Left ventricle myocardium superior (tissue), 1 donor: ENCODE measurements at regions of chr5 and their contacts with region 1.

Region 1: GRCh38 chr5:23289162-23289561 is 218.2 kb upstream of the PRDM9 start:
- DNase-seq: no peak
- ATAC-seq: no peak

Region 2: GRCh38 chr5:23314827-23315226 is 25.7 kb after region 1 on chr5:
- intact Hi-C with region 1: loop called (anchors 2 kb)
- DNase-seq: no peak
- ATAC-seq: no peak